ENCODE measurements at regions of chr20 and their contacts with region 1.

Region 1: GRCh38 chr20:17504898-17505635 is 26.1 kb downstream of the BFSP1 start:
- DNase-seq: peak; percentile 67
- H3K4me3 Mint-ChIP-seq: peak overlapping the region; percentile 80
- H3K27ac Mint-ChIP-seq: peak overlapping the region; percentile 66
- H3K4me1 Mint-ChIP-seq: peaks cover 35% of the 10 kb centered on the region
- H3K27me3 Mint-ChIP-seq: no peaks in the 10 kb centered on the region

Region 2: GRCh38 chr20:17226410-17227218 is 278.5 kb before region 1 on chr20 and contains the start of gene PCSK2:
- CTCF ChIA-PET with region 1: no interaction called
- POLR2A ChIA-PET with region 1: no interaction called
- intact Hi-C with region 1: no loop called
- DNase-seq: no peak
- H3K4me3 Mint-ChIP-seq: no peak within 1 kb of the TSS
- H3K27ac Mint-ChIP-seq: no peak within 1 kb of the TSS
- H3K4me1 Mint-ChIP-seq: peaks cover 2% of the 10 kb centered on the region
- H3K27me3 Mint-ChIP-seq: peaks cover 48% of the 10 kb centered on the region
- total RNA-seq, gene PCSK2: not detected

Region 3: GRCh38 chr20:17530716-17531664 is 25.9 kb after region 1 on chr20 and contains the start of gene BFSP1:
- CTCF ChIA-PET with region 1: interaction called, 18 read pairs
- POLR2A ChIA-PET with region 1: no interaction called
- intact Hi-C with region 1: loop called (anchors 1 kb)
- DNase-seq: peak; percentile 72
- H3K4me3 Mint-ChIP-seq: peak within 1 kb of the TSS; percentile 88
- H3K27ac Mint-ChIP-seq: peak within 1 kb of the TSS; percentile 70
- H3K4me1 Mint-ChIP-seq: peaks cover 17% of the 10 kb centered on the region
- H3K27me3 Mint-ChIP-seq: peaks cover 3% of the 10 kb centered on the region
- total RNA-seq, gene BFSP1: 0.34 to 0.36 TPM

Region 4: DNA sequence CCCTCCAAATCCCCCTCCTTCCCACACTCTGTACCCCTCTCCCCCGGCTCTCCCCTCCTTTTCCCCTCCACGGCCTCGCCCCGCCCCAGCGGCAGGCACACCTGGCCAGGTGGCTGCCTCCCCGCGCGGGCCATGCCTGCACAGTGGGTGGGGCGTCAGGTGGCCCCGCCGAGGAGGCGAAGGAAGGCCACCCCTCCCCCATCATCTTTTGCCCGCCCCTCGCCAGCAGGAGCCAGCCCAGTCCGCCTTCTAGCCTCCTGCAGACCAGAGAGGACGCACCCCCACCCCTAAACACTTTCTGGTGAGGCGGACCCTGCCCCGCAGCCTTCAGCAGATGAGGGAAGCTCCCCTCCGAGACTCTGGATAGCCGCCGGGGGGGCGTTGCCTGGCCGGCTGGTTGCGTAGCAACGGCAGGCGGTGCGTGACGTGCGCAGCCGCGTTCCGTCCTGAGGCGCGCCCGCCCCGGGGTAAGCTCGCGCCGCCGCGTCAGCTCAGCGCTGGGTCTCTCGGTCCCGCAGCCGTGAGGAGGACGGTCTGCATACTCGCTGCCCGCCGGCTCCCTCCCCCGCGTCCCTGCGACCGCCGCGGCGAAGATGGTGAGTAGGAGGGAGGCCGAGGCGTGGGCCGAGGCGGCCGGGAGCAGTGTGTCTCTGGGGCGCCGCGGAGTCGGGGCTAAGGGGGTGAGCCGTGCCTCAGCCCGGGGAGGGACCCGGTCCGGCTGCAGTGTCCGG is 64.7 kb after region 1 on chr20 and contains the start of gene DSTN:
- CTCF ChIA-PET with region 1: interaction called, 20 read pairs
- POLR2A ChIA-PET with region 1: interaction called, 5 read pairs
- intact Hi-C with region 1: loop called (anchors 2 kb)
- DNase-seq: peak; percentile 90
- H3K4me3 Mint-ChIP-seq: peak within 1 kb of the TSS; percentile 90
- H3K27ac Mint-ChIP-seq: peak within 1 kb of the TSS; percentile 79
- H3K4me1 Mint-ChIP-seq: peaks cover 27% of the 10 kb centered on the region
- H3K27me3 Mint-ChIP-seq: no peaks in the 10 kb centered on the region
- total RNA-seq, gene DSTN: 91.2 to 94.3 TPM

Region 5: DNA sequence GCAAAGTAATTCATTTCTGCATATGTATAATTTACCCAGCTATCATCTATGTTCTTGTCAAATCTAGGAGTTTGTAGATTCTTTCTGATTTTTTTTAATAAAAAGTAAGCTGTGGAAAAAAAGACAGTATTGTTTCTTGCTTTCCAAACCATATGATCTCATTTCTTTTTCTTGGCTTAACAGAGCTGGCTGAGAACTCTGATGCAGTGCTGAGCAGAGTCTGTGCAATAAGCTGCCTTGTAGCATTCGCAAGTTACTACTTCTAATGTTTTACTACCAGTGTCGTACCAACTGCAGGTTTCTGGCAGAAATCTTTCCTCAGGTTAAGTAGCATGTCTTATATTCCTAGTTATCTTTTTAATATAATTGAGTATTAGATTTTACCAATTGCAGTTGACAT is 161.4 kb after region 1 on chr20:
- CTCF ChIA-PET with region 1: no interaction called
- POLR2A ChIA-PET with region 1: no interaction called
- intact Hi-C with region 1: loop called (anchors 5 kb)
- DNase-seq: peak; percentile 3
- H3K4me3 Mint-ChIP-seq: no peak overlapping the region
- H3K27ac Mint-ChIP-seq: no peak overlapping the region
- H3K4me1 Mint-ChIP-seq: peaks cover 43% of the 10 kb centered on the region
- H3K27me3 Mint-ChIP-seq: no peaks in the 10 kb centered on the region

Region 6: GRCh38 chr20:17938871-17939619 is 434.0 kb after region 1 on chr20:
- CTCF ChIA-PET with region 1: interaction called, 13 read pairs
- POLR2A ChIA-PET with region 1: no interaction called
- intact Hi-C with region 1: loop called (anchors 1 kb)
- DNase-seq: peak; percentile 70
- H3K4me3 Mint-ChIP-seq: no peak overlapping the region
- H3K27ac Mint-ChIP-seq: peak overlapping the region; percentile 5
- H3K4me1 Mint-ChIP-seq: peaks cover 21% of the 10 kb centered on the region
- H3K27me3 Mint-ChIP-seq: no peaks in the 10 kb centered on the region

Region 7: DNA sequence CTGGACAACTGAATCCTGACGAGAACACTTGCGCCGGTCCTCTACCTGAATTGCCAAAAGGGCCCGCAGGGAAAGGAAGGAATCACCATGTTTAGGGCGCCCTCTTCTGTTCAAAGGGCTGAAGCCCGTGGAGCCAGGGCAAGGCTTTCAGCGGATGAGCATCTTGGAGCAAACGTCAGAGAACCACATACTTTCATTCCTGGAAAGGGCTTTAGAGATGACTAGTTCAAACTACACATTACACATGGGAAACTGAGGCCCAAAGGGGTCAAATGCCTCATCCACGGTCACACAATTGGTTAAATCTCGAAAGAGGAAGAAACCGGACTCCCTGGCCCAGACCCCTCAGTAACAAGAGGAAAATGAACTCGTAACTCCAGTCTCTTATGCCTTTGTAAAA is 771.8 kb after region 1 on chr20:
- CTCF ChIA-PET with region 1: no interaction called
- POLR2A ChIA-PET with region 1: no interaction called
- intact Hi-C with region 1: loop called (anchors 2 kb)
- DNase-seq: peak; percentile 84
- H3K4me3 Mint-ChIP-seq: no peak overlapping the region
- H3K27ac Mint-ChIP-seq: no peak overlapping the region
- H3K4me1 Mint-ChIP-seq: peaks cover 2% of the 10 kb centered on the region
- H3K27me3 Mint-ChIP-seq: peaks cover 32% of the 10 kb centered on the region